Posterior vena cava (tissue), 2 donors: ENCODE measurements at regions of chr7 and their contacts with region 1.

Region 1: DNA sequence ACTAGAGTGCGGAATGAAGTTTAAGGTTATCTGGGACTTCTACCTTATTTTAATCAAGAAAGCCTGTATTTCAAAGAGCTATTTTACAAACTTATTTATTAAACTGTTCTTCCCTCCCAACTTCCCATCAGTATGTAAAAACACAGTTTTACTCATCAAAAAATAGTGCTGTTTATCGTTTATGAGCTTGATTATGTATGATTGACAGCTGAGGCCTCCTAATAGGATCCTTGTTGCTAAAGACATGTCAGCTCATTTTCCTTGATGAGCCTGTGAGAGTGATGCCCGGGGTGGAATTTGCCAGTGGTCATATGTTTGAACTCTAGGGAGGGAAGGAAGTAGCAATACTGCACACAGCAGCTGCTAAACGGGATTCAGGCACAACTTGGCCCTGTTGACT is 235.4 kb upstream of the AGK start:
- DNase-seq: no peak

Region 2: DNA sequence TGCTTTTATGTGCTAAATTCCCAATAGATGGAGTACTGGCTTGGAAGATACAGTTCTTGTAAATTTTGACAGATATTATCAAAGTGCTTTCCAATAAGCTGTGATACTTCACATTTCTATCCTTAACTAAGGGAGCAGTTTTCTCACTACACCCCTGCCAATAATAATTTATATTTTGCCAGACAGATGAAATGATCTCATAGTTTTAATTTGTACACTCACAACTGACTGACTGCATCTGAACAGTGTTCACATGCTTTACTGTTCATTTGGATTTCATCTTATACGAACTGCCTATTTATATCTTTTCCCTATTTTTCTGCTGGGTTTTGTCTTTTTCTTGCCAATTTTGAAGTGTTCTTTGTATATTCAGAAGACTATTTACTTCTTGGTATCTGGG is 487.0 kb before region 1 on chr7:
- intact Hi-C with region 1: no loop called
- DNase-seq: no peak

Region 3: DNA sequence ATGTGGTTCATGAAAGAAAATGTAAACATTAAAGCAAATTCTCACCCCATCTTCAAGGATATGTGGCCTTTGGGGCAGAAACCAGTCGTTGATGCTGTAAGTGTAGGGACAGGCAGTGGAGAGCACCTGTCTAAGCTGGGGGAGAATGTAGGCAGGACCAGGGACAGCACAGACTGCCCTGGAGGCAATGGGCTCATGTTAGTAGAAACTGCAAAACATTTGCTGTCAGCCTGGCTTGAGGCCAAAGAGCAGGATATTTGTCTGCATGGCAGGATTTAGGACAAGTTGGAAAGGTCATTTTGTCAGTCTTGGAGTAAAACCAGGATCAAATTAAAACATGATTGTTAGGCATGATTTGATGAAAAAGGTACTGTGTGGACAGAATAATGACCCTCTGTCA is 23.8 kb after region 1 on chr7:
- intact Hi-C with region 1: loop called in 1 of 2 experiments (anchors 1 kb)
- DNase-seq: no peak